ENCODE measurements at regions of chr9 and their contacts with region 1.

Region 1: GRCh38 chr9:126939821-126940221 is 25.2 kb downstream of the RALGPS1 start:
- DNase-seq: no peak
- H3K4me3 ChIP-seq: no peak overlapping the region
- H3K27ac ChIP-seq: no peak overlapping the region
- H3K4me1 ChIP-seq: no peaks in the 10 kb centered on the region
- H3K27me3 ChIP-seq: no peaks in the 10 kb centered on the region
- CTCF ChIP-seq: no peak
- POLR2A ChIP-seq: no peak

Region 2: GRCh38 chr9:126702151-126703001 is 237.4 kb before region 1 on chr9:
- intact Hi-C with region 1: no loop called
- DNase-seq: peak; percentile 51
- H3K4me3 ChIP-seq: no peak overlapping the region
- H3K27ac ChIP-seq: no peak overlapping the region
- H3K4me1 ChIP-seq: peaks cover 14% of the 10 kb centered on the region
- H3K27me3 ChIP-seq: no peaks in the 10 kb centered on the region
- CTCF ChIP-seq: peak; percentile 17 to 59 (median 37)
- POLR2A ChIP-seq: no peak

Region 3: GRCh38 chr9:126806336-126806735 is 133.5 kb before region 1 on chr9:
- intact Hi-C with region 1: no loop called
- DNase-seq: no peak
- H3K4me3 ChIP-seq: peak overlapping the region in 1 of 2 donors; percentile 93
- H3K27ac ChIP-seq: peak overlapping the region; percentile 45 to 70
- H3K4me1 ChIP-seq: peaks cover 12% of the 10 kb centered on the region
- H3K27me3 ChIP-seq: no peaks in the 10 kb centered on the region
- CTCF ChIP-seq: no peak
- POLR2A ChIP-seq: no peak

Region 4: GRCh38 chr9:127035951-127036350 is 96.1 kb after region 1 on chr9:
- intact Hi-C with region 1: no loop called
- DNase-seq: no peak
- H3K4me3 ChIP-seq: no peak overlapping the region
- H3K27ac ChIP-seq: peak overlapping the region in 1 of 2 donors; percentile 23
- H3K4me1 ChIP-seq: peaks cover 19% of the 10 kb centered on the region
- H3K27me3 ChIP-seq: no peaks in the 10 kb centered on the region
- CTCF ChIP-seq: no peak
- POLR2A ChIP-seq: no peak

Region 5: GRCh38 chr9:127199001-127199791 is 259.4 kb after region 1 on chr9:
- intact Hi-C with region 1: loop called (anchors 5 kb)
- DNase-seq: peak; percentile 90
- H3K4me3 ChIP-seq: no peak overlapping the region
- H3K27ac ChIP-seq: no peak overlapping the region
- H3K4me1 ChIP-seq: peaks cover 17% of the 10 kb centered on the region
- H3K27me3 ChIP-seq: no peaks in the 10 kb centered on the region
- CTCF ChIP-seq: peak; percentile 92 to 97 (median 96)
- POLR2A ChIP-seq: no peak

Measured in testis (tissue), 5 donors.